ENCODE measurements at regions of chr4 and their contacts with region 1.

Region 1: DNA sequence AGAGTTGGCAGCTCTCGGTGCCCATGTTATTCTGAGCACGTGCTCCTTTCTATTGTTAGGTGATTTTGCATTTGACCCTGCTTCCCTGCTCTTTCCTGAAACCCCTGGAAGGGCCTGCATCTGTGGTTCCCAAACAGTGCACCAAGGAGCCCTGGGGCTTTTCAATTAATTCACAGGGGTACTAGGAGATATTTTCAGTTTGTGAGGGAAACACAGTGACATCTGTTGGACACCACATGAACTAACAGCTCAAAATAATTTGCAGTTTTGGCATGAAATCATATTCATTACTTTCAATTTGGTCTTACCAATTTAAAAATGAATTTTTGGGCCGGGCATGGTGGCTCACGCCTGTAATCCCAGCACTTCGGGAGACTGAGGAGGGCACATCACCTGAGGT is 156.6 kb downstream of the GATB start:
- DNase-seq: no peak
- H3K4me3 ChIP-seq: no peak overlapping the region
- H3K27ac ChIP-seq: no peak overlapping the region
- H3K4me1 ChIP-seq: no peaks in the 10 kb centered on the region
- H3K27me3 ChIP-seq: no peaks in the 10 kb centered on the region
- CTCF ChIP-seq: peak; percentile 33 to 55 (median 48)
- POLR2A ChIP-seq: no peak

Region 2: DNA sequence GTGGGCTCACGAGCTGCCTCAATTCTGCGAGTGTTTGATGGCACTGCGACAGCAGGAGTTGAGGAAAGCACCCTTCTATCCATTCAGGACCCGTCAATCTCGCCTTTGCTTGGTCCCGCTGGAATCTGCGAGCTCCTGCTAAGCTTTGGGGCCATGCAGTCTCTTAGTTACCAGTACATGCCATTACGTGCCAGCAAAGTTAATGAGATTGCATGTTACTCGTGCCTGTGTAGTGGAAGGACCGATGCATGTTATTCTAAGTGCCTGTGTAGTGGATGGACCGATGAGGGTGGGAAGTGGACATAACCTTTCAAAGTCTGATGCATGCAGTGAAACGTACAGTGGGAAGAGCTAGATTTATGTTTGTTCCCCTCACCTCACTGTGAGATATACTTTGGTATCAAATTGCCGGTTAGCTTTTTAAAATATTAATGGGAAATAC is 504.2 kb before region 1 on chr4:
- intact Hi-C with region 1: loop called in 1 of 2 experiments (anchors 10 kb)
- DNase-seq: no peak
- H3K4me3 ChIP-seq: peak overlapping the region; percentile 48 to 79 (median 72)
- H3K27ac ChIP-seq: peak overlapping the region in 4 of 5 donors; percentile 81 to 90 (median 88)
- H3K4me1 ChIP-seq: peaks cover 8 to 23% of the 10 kb centered on the region in 2 donors
- H3K27me3 ChIP-seq: no peaks in the 10 kb centered on the region
- CTCF ChIP-seq: no peak
- POLR2A ChIP-seq: no peak

Region 3: GRCh38 chr4:151489462-151490203 is 114.6 kb before region 1 on chr4:
- intact Hi-C with region 1: no loop called
- DNase-seq: no peak
- H3K4me3 ChIP-seq: no peak overlapping the region
- H3K27ac ChIP-seq: no peak overlapping the region
- H3K4me1 ChIP-seq: peaks cover 0 to 4% of the 10 kb centered on the region in 2 donors
- H3K27me3 ChIP-seq: no peaks in the 10 kb centered on the region
- CTCF ChIP-seq: no peak
- POLR2A ChIP-seq: no peak